ENCODE measurements at regions of chr6 and their contacts with region 1.

Region 1: GRCh38 chr6:16332175-16332542 is 93.8 kb downstream of the GMPR start:
- DNase-seq: peak; percentile 61 to 90 (median 81)
- ATAC-seq: peak; percentile 97
- H3K4me3 ChIP-seq: peak overlapping the region in 1 of 2 experiments; percentile 27
- H3K4me3 Mint-ChIP-seq: no peak overlapping the region
- H3K27ac ChIP-seq: no peak overlapping the region
- H3K27ac Mint-ChIP-seq: no peak overlapping the region
- H3K4me1 ChIP-seq: peaks cover 10% of the 10 kb centered on the region
- H3K4me1 Mint-ChIP-seq: no peaks in the 10 kb centered on the region
- H3K27me3 ChIP-seq: no peaks in the 10 kb centered on the region
- H3K27me3 Mint-ChIP-seq: no peaks in the 10 kb centered on the region
- CTCF ChIP-seq: peak; percentile 67

Region 2: DNA sequence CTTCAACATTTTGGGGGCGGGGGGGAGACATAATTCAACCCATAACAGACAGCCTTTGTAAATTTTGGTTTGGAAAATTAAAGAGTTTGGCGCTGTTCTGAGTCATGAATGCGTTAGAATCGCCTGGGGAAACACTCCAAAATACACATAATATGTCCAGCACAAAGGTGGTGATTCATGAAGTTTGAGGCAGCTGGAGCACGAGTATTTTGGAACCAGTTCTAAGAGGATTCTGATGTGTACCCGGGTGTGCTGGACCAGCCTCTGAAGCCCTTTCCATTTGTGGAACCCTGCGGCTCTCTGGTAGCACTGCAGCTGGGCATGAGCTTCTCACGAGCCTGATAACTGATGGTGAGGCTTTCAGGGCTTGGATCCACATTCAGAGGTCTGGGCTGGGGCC is 89.1 kb before region 1 on chr6:
- CTCF ChIA-PET with region 1: no interaction called
- POLR2A ChIA-PET with region 1: no interaction called
- intact Hi-C with region 1: no loop called
- DNase-seq: no peak
- ATAC-seq: no peak
- H3K4me3 ChIP-seq: no peak overlapping the region
- H3K4me3 Mint-ChIP-seq: no peak overlapping the region
- H3K27ac ChIP-seq: no peak overlapping the region
- H3K27ac Mint-ChIP-seq: no peak overlapping the region
- H3K4me1 ChIP-seq: peaks cover 8% of the 10 kb centered on the region
- H3K4me1 Mint-ChIP-seq: peaks cover 10% of the 10 kb centered on the region
- H3K27me3 ChIP-seq: no peaks in the 10 kb centered on the region
- H3K27me3 Mint-ChIP-seq: peaks cover 5% of the 10 kb centered on the region
- CTCF ChIP-seq: no peak

Region 3: GRCh38 chr6:16277101-16277981 is 54.8 kb before region 1 on chr6:
- CTCF ChIA-PET with region 1: no interaction called
- POLR2A ChIA-PET with region 1: no interaction called
- intact Hi-C with region 1: no loop called
- DNase-seq: no peak
- ATAC-seq: no peak
- H3K4me3 ChIP-seq: no peak overlapping the region
- H3K4me3 Mint-ChIP-seq: no peak overlapping the region
- H3K27ac ChIP-seq: no peak overlapping the region
- H3K27ac Mint-ChIP-seq: no peak overlapping the region
- H3K4me1 ChIP-seq: no peaks in the 10 kb centered on the region
- H3K4me1 Mint-ChIP-seq: no peaks in the 10 kb centered on the region
- H3K27me3 ChIP-seq: no peaks in the 10 kb centered on the region
- H3K27me3 Mint-ChIP-seq: no peaks in the 10 kb centered on the region
- CTCF ChIP-seq: no peak

Region 4: GRCh38 chr6:16344756-16345155 is 12.6 kb after region 1 on chr6:
- CTCF ChIA-PET with region 1: interaction called, 13 read pairs
- POLR2A ChIA-PET with region 1: interaction called, 3 read pairs
- intact Hi-C with region 1: no loop called
- DNase-seq: no peak
- ATAC-seq: no peak
- H3K4me3 ChIP-seq: no peak overlapping the region
- H3K4me3 Mint-ChIP-seq: no peak overlapping the region
- H3K27ac ChIP-seq: no peak overlapping the region
- H3K27ac Mint-ChIP-seq: no peak overlapping the region
- H3K4me1 ChIP-seq: no peaks in the 10 kb centered on the region
- H3K4me1 Mint-ChIP-seq: no peaks in the 10 kb centered on the region
- H3K27me3 ChIP-seq: no peaks in the 10 kb centered on the region
- H3K27me3 Mint-ChIP-seq: no peaks in the 10 kb centered on the region
- CTCF ChIP-seq: no peak

Region 5: DNA sequence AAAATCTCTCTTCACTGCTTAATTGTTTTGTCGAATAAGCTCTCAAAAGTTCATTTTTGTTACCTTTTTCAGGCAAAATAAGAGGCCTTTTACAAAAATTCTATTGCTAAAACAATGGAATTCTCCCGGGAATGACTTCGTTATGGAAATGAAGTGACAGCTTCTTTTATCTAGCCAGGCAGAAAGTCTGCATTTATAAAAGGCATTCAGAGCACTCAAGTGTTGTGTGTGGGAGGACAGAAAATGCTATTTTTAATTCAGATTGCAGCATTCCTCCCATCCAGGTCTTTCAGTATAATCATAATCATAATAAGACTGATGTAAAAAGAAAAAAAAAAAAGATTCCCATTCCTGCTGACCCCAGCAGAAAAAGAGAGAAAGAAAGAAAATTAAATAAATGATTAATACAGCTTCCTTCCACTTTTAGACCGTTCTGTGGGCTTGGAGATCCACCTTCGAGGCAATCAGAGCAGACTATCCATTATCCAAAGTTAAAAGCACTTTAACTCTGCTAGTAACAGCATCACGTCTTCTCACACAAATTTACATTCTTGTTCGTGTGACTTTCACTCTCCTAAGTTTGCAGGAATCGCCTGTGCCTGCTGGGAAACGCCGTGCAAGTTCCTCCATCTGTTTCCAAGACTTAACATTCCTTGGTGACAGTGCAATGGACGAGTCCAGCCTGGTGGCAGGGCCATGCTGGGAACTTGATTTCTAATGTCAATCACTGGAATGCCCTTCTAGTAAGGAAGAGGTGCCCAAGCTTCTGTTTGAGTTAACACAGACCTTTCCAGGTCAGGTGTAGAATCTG is 165.0 kb after region 1 on chr6:
- CTCF ChIA-PET with region 1: interaction called, 3 read pairs
- POLR2A ChIA-PET with region 1: no interaction called
- intact Hi-C with region 1: loop called (anchors 1 to 2 kb)
- DNase-seq: no peak
- ATAC-seq: no peak
- H3K4me3 ChIP-seq: no peak overlapping the region
- H3K4me3 Mint-ChIP-seq: no peak overlapping the region
- H3K27ac ChIP-seq: no peak overlapping the region
- H3K27ac Mint-ChIP-seq: peak overlapping the region; percentile 34
- H3K4me1 ChIP-seq: peaks cover 9% of the 10 kb centered on the region
- H3K4me1 Mint-ChIP-seq: peaks cover 34% of the 10 kb centered on the region
- H3K27me3 ChIP-seq: no peaks in the 10 kb centered on the region
- H3K27me3 Mint-ChIP-seq: no peaks in the 10 kb centered on the region
- CTCF ChIP-seq: no peak

Region 6: DNA sequence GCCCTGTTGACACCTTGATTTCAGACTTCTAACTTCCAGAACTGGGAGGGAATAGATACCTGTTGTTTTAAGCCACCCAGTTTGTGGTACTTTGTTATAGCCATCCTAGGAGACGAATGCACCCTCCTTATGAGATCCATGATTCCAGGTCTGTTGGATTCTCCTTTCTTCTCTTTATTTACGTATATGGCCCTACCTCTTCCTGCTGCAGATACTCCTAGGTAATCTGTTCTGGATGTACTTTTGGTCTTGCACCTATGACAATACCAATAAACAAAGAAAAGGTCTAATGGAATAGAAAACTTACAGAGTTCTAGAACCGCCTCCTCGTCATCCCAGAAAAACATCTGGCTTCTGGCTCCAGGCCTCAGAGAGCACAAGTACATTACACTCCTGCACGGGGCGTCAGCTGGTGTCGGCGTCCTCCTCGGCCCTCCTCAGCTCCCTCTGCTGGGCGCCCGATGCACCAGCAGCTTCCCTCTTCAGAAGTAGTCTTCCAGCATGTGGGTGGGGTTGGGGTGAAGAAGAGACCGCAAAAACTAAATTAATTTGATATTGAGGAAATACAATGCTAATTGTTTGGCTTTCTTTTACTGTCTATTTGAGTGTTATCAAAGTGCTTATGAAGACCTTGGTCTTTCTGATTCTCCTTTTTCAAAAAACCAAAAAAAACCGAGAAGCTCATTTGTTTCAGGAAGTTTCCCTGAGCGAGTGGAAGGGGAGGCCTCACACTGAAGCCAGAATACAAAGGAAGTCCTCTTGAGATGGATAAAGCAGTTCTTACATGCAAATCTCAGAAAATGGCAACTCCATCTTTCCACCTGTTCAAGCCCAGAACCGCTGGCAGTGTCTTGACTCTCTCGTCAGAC is 438.8 kb after region 1 on chr6:
- CTCF ChIA-PET with region 1: interaction called, 58 read pairs
- POLR2A ChIA-PET with region 1: interaction called, 3 read pairs
- intact Hi-C with region 1: loop called (anchors 1 kb)
- DNase-seq: peak; percentile 57 to 89 (median 78)
- ATAC-seq: peak; percentile 78
- H3K4me3 ChIP-seq: no peak overlapping the region
- H3K4me3 Mint-ChIP-seq: peak overlapping the region; percentile 37
- H3K27ac ChIP-seq: no peak overlapping the region
- H3K27ac Mint-ChIP-seq: peak overlapping the region; percentile 41
- H3K4me1 ChIP-seq: peaks cover 25% of the 10 kb centered on the region
- H3K4me1 Mint-ChIP-seq: peaks cover 58% of the 10 kb centered on the region
- H3K27me3 ChIP-seq: no peaks in the 10 kb centered on the region
- H3K27me3 Mint-ChIP-seq: no peaks in the 10 kb centered on the region
- CTCF ChIP-seq: peak; percentile 98

Region 7: GRCh38 chr6:16964553-16965501 is 632.7 kb after region 1 on chr6:
- CTCF ChIA-PET with region 1: interaction called, 3 read pairs
- POLR2A ChIA-PET with region 1: no interaction called
- intact Hi-C with region 1: loop called (anchors 1 to 2 kb)
- DNase-seq: peak; percentile 34 to 72 (median 59)
- ATAC-seq: peak; percentile 92
- H3K4me3 ChIP-seq: no peak overlapping the region
- H3K4me3 Mint-ChIP-seq: no peak overlapping the region
- H3K27ac ChIP-seq: no peak overlapping the region
- H3K27ac Mint-ChIP-seq: no peak overlapping the region
- H3K4me1 ChIP-seq: peaks cover 4% of the 10 kb centered on the region
- H3K4me1 Mint-ChIP-seq: peaks cover 6% of the 10 kb centered on the region
- H3K27me3 ChIP-seq: no peaks in the 10 kb centered on the region
- H3K27me3 Mint-ChIP-seq: peaks cover 14% of the 10 kb centered on the region
- CTCF ChIP-seq: peak; percentile 67

Region 8: DNA sequence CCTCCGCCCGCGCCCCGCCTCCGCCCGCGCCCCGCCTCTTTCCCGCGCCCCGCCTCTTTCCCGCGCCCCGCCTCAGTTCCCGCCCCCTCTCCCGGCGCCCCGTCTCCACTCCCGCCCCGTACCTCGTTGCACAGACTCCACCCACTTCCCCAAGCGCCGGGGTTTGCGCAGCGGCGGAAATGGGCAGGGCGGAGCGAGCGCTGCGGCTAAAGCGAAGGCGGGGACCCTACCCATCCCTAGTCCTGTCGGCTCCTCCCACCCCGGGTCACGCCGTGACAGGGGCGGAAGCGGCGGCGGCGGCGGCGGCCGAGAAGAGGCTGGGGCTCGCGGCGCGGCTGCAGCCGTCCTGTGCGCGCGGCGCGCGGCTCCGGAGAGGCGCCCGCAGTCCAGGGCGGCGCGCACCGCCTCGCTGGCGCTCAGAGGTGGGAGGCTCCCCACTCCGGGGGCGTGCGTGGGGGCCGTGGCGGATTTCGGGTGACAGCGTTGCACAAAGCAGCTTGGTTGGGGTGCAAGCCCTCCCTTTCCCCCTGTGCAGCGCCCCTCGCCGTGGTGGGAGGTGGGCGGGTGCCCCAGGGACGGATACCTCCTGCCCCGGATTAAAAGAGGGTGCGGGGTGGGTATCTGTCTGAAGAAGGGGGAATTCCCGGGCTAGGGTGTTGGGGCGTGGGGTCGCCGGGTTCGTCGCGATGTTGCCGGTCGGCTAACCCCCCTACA is 1823.1 kb after region 1 on chr6 and contains the start of gene KDM1B:
- CTCF ChIA-PET with region 1: no interaction called
- POLR2A ChIA-PET with region 1: no interaction called
- intact Hi-C with region 1: loop called in 1 of 2 experiments (anchors 10 kb)
- DNase-seq: peak; percentile 97 to 99 (median 99)
- ATAC-seq: peak; percentile 93
- H3K4me3 ChIP-seq: peak within 1 kb of the TSS; percentile 89 to 99
- H3K4me3 Mint-ChIP-seq: peak within 1 kb of the TSS; percentile 98
- H3K27ac ChIP-seq: peak within 1 kb of the TSS; percentile 90
- H3K27ac Mint-ChIP-seq: peak within 1 kb of the TSS; percentile 96
- H3K4me1 ChIP-seq: peaks cover 15% of the 10 kb centered on the region
- H3K4me1 Mint-ChIP-seq: peaks cover 38% of the 10 kb centered on the region
- H3K27me3 ChIP-seq: no peaks in the 10 kb centered on the region
- H3K27me3 Mint-ChIP-seq: no peaks in the 10 kb centered on the region
- CTCF ChIP-seq: no peak
- total RNA-seq, gene KDM1B: 4.5 to 6.2 TPM

Measured in CD8-positive, alpha-beta T cell (primary cell).